HAP-1 (cell line): ENCODE measurements at regions of chr15 and their contacts with region 1.

Region 1: DNA sequence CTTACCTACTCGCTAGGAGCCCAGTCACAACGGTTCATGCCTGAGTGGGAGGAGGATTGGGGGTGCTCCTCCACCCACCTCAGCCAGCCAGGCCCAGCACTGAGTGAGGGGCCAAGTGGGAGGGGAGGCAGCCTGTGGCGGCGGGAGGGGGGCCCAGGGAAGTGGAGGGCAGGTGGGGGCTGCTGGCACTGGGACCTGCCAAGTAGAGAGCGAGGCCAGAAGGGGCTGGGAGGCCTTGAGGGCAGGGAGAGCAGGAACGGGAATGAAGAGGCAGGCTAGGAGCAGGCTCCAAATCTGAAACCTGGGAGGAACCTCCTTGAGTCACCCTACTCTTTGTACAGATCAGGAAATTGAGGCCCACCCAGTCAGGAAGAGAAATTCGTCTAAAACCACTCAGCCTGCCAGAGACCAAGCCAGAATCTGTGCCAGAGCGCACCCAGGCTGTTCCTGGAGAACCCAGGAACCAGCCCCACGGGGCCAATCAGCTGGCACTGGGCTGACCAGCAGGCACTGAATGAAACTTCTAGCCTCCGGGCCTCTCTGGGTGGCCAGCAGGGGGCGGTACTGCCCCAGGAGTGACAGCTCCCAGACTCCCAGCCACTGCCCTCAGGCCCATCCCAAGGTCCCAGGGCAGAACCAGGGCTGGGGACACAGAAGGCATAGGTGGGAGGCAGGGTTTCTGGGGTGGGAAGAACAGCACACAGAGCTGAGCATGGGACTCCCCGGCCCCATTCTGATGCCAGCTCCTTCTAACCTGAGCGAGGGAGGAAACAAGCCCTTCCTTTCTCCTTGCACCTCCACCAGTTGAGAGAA is 14.8 kb upstream of the CYP11A1 start:
- DNase-seq: peak; percentile 87 to 98
- H3K4me3 ChIP-seq: no peak overlapping the region
- H3K4me1 ChIP-seq: no peaks in the 10 kb centered on the region; the same call in 1 of the 2 replicates
- H3K27me3 ChIP-seq: no peaks in the 10 kb centered on the region

Region 2: DNA sequence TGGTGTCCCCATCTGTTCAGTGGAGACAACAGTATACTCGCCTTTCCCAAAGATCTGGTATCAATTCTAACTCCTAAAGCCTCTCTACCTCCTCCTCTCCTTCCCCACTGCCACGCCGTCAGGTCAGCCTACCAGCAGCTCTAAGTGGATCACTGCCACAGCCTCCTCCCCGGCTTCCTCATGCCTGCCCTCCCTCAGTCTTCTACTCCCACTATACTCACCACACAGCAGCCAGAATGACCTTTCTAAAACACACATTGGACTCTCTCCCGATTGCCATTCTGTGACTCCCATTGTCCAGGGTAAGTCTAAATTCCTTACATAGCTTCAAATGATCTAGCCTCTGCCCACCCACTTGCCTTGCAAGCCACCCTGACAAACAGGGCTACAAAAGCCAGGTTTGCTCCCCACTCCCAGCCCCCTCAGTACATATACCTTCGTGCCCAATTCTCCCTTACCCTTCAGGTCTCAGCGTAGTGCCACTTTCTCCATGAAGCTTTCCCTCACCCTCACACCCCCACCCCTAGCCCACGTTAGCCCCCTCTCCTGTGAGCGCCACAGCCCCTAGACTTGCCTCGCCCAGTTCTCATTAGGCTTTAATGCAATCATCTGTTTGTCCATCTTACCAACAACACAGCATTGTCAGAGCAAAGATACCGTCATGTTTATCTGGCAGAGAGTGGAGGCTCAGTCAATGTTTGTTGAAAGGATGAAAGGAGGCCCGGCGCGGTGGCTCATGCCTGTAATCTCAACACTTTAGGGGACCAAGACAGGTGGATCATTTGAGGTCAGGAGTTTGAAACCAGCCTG is 61.1 kb after region 1 on chr15:
- in situ Hi-C with region 1: loop called (anchors 5 kb)
- DNase-seq: no peak
- H3K4me3 ChIP-seq: no peak overlapping the region
- H3K4me1 ChIP-seq: no peaks in the 10 kb centered on the region
- H3K27me3 ChIP-seq: no peaks in the 10 kb centered on the region

Region 3: GRCh38 chr15:74489518-74490338 is 107.5 kb after region 1 on chr15:
- in situ Hi-C with region 1: loop called (anchors 10 kb)
- DNase-seq: peak; percentile 84 to 93
- H3K4me3 ChIP-seq: no peak overlapping the region
- H3K4me1 ChIP-seq: peaks cover 6% of the 10 kb centered on the region
- H3K27me3 ChIP-seq: no peaks in the 10 kb centered on the region